ENCODE measurements at regions of chr12 and their contacts with region 1.

Region 1: DNA sequence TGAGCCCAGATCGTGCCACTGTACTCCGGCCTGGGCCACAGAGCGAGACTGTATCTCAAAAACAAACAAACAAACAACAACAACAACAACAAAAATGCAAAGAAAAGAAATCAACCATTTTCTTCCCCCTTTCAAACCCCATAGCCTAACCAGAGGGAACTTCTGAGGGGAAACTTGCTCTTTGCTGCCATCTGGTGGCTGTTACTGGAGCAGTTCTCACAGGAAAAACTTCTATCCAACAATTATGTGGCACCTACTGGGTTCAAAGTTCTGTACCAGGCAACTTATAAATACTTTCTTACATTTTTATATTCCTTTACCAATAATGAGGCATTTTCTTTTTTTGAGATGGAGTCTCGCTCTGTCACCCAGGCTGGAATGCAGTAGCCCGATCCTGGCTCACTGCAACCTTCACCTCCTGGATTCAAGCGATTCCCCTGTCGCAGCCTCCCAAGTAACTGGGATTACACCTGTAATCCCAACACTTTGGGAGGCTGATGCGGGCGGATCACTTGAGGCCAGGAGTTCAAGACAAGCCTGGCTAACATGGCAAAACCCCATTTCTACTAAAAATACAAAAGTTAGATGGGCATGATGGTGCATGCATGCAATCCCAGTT is 50.9 kb upstream of the BICDL1 start:
- DNase-seq: peak; percentile 50 to 88 (median 62)
- ATAC-seq: peak; percentile 89
- H3K4me3 ChIP-seq: no peak overlapping the region
- H3K4me3 Mint-ChIP-seq: no peak overlapping the region
- H3K27ac ChIP-seq: no peak overlapping the region
- H3K27ac Mint-ChIP-seq: no peak overlapping the region
- H3K4me1 ChIP-seq: peaks cover 3% of the 10 kb centered on the region
- H3K4me1 Mint-ChIP-seq: no peaks in the 10 kb centered on the region
- H3K27me3 ChIP-seq: no peaks in the 10 kb centered on the region
- H3K27me3 Mint-ChIP-seq: no peaks in the 10 kb centered on the region
- CTCF ChIP-seq: peak; percentile 79

Region 2: GRCh38 chr12:119980242-119980641 is 42.1 kb after region 1 on chr12:
- CTCF ChIA-PET with region 1: no interaction called
- POLR2A ChIA-PET with region 1: no interaction called
- intact Hi-C with region 1: loop called in 1 of 2 experiments (anchors 5 kb)
- DNase-seq: no peak
- ATAC-seq: no peak
- H3K4me3 ChIP-seq: no peak overlapping the region
- H3K4me3 Mint-ChIP-seq: no peak overlapping the region
- H3K27ac ChIP-seq: no peak overlapping the region
- H3K27ac Mint-ChIP-seq: no peak overlapping the region
- H3K4me1 ChIP-seq: no peaks in the 10 kb centered on the region
- H3K4me1 Mint-ChIP-seq: peaks cover 5% of the 10 kb centered on the region
- H3K27me3 ChIP-seq: no peaks in the 10 kb centered on the region
- H3K27me3 Mint-ChIP-seq: no peaks in the 10 kb centered on the region
- CTCF ChIP-seq: no peak

Region 3: GRCh38 chr12:119994892-119995651 is 56.9 kb after region 1 on chr12:
- CTCF ChIA-PET with region 1: no interaction called
- POLR2A ChIA-PET with region 1: no interaction called
- intact Hi-C with region 1: no loop called
- DNase-seq: no peak
- ATAC-seq: no peak
- H3K4me3 ChIP-seq: no peak overlapping the region
- H3K4me3 Mint-ChIP-seq: no peak overlapping the region
- H3K27ac ChIP-seq: no peak overlapping the region
- H3K27ac Mint-ChIP-seq: no peak overlapping the region
- H3K4me1 ChIP-seq: peaks cover 13% of the 10 kb centered on the region
- H3K4me1 Mint-ChIP-seq: peaks cover 54% of the 10 kb centered on the region
- H3K27me3 ChIP-seq: no peaks in the 10 kb centered on the region
- H3K27me3 Mint-ChIP-seq: no peaks in the 10 kb centered on the region
- CTCF ChIP-seq: no peak

Measured in CD4-positive, alpha-beta T cell (primary cell).